ENCODE measurements at regions of chr4 and their contacts with region 1.

Region 1: GRCh38 chr4:146916479-146917076 is 29.1 kb downstream of the TTC29 start:
- DNase-seq: peak; percentile 19 to 42 (median 24)
- ATAC-seq: no peak
- H3K4me3 ChIP-seq: no peak overlapping the region
- H3K27ac ChIP-seq: no peak overlapping the region
- H3K4me1 ChIP-seq: no peaks in the 10 kb centered on the region
- H3K27me3 ChIP-seq: no peaks in the 10 kb centered on the region
- CTCF ChIP-seq: peak; percentile 37 to 73 (median 47); a peak in 4 of 6 replicates
- EP300 ChIP-seq: no peak
- POLR2A ChIP-seq: no peak
- RAD21 ChIP-seq: peak; percentile 78 to 80

Region 2: GRCh38 chr4:145234091-145234706 is 1682.4 kb before region 1 on chr4:
- CTCF ChIA-PET with region 1: no interaction called
- POLR2A ChIA-PET with region 1: no interaction called
- in situ Hi-C with region 1: no loop called
- intact Hi-C with region 1: loop called (anchors 10 kb)
- DNase-seq: peak; percentile 42 to 77 (median 55)
- ATAC-seq: peak; percentile 100
- H3K4me3 ChIP-seq: no peak overlapping the region
- H3K27ac ChIP-seq: no peak overlapping the region
- H3K4me1 ChIP-seq: no peaks in the 10 kb centered on the region; a peak in 1 of 5 replicates
- H3K27me3 ChIP-seq: no peaks in the 10 kb centered on the region; a peak in 2 of 5 replicates
- CTCF ChIP-seq: peak; percentile 73 to 83 (median 74)
- EP300 ChIP-seq: no peak
- POLR2A ChIP-seq: no peak
- RAD21 ChIP-seq: peak; percentile 74 to 81

Region 3: GRCh38 chr4:146124023-146124662 is 792.4 kb before region 1 on chr4:
- CTCF ChIA-PET with region 1: no interaction called
- POLR2A ChIA-PET with region 1: no interaction called
- in situ Hi-C with region 1: loop called (anchors 25 kb)
- intact Hi-C with region 1: no loop called
- DNase-seq: no peak
- ATAC-seq: no peak
- H3K4me3 ChIP-seq: no peak overlapping the region
- H3K27ac ChIP-seq: no peak overlapping the region
- H3K4me1 ChIP-seq: no peaks in the 10 kb centered on the region
- H3K27me3 ChIP-seq: no peaks in the 10 kb centered on the region
- CTCF ChIP-seq: no peak
- EP300 ChIP-seq: no peak
- POLR2A ChIP-seq: no peak
- RAD21 ChIP-seq: no peak

Region 4: GRCh38 chr4:146333187-146333894 is 583.2 kb before region 1 on chr4:
- CTCF ChIA-PET with region 1: no interaction called
- POLR2A ChIA-PET with region 1: no interaction called
- in situ Hi-C with region 1: loop called (anchors 10 kb)
- intact Hi-C with region 1: no loop called
- DNase-seq: no peak
- ATAC-seq: no peak
- H3K4me3 ChIP-seq: no peak overlapping the region
- H3K27ac ChIP-seq: no peak overlapping the region
- H3K4me1 ChIP-seq: 0 out of 5 replicates have a peak, but pooled peaks cover 0 to 6% of the 10 kb centered on the region in 2 experiments
- H3K27me3 ChIP-seq: no peaks in the 10 kb centered on the region
- CTCF ChIP-seq: no peak
- EP300 ChIP-seq: no peak
- POLR2A ChIP-seq: no peak
- RAD21 ChIP-seq: no peak

Region 5: GRCh38 chr4:146545102-146545501 is 371.5 kb before region 1 on chr4:
- CTCF ChIA-PET with region 1: no interaction called
- POLR2A ChIA-PET with region 1: no interaction called
- in situ Hi-C with region 1: no loop called
- intact Hi-C with region 1: loop called (anchors 10 kb)
- DNase-seq: peak; percentile 32 to 53 (median 37)
- ATAC-seq: peak; percentile 91
- H3K4me3 ChIP-seq: no peak overlapping the region
- H3K27ac ChIP-seq: no peak overlapping the region
- H3K4me1 ChIP-seq: no peaks in the 10 kb centered on the region
- H3K27me3 ChIP-seq: no peaks in the 10 kb centered on the region
- CTCF ChIP-seq: peak; percentile 35 to 43 (median 42)
- EP300 ChIP-seq: no peak
- POLR2A ChIP-seq: no peak
- RAD21 ChIP-seq: peak in 1 of 2 experiments; percentile 17; a peak in 2 of 4 replicates

Region 6: GRCh38 chr4:146790515-146790914 is 126.1 kb before region 1 on chr4:
- CTCF ChIA-PET with region 1: no interaction called
- POLR2A ChIA-PET with region 1: no interaction called
- in situ Hi-C with region 1: no loop called
- intact Hi-C with region 1: no loop called
- DNase-seq: no peak
- ATAC-seq: no peak
- H3K4me3 ChIP-seq: no peak overlapping the region
- H3K27ac ChIP-seq: no peak overlapping the region
- H3K4me1 ChIP-seq: no peaks in the 10 kb centered on the region
- H3K27me3 ChIP-seq: no peaks in the 10 kb centered on the region
- CTCF ChIP-seq: no peak
- EP300 ChIP-seq: no peak
- POLR2A ChIP-seq: no peak
- RAD21 ChIP-seq: no peak